ENCODE measurements at regions of chr15 and their contacts with region 1.

Region 1: DNA sequence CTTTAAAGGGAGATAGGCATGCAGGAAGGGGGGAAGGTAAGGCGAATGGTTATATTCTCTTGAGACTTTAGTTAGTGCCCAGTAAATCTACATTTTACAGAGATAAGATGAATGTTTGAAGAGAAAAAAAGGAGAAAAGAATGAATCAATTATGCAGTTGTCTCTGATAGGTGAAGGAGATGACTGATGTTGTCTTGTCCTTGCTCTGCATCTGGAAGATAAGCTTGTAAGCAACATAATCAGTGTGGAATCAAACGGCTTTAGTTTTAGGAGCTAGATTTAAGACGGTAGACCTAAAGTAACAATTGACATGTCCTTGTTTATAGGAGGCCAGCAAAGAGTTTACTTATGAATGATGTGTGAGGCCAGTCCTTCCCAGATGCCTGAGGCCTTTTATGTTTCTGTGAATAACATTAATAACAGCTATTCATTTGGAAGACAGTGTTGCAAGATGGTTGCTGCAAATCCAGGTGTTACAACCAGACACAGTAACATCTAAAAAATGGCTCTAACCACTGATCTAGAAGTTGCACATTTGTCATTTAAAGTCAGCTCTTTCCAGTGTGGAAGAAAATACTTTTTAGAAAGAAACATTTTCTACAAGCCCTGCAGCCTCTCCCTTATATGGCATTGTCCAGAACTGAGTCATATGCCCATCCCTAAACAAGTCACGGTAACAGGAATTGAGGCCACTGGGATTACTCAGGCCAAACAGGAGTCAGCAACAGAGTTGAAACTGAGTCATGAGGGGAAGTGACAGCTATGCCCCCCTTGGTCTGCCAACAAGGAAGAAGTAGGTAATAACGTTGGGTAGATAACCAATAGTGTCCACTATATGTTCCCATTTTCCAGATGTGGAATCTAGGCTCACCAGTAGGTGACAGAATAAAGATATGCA is 77.5 kb upstream of the FBN1 start:
- DNase-seq: peak; percentile 8
- H3K4me3 ChIP-seq: no peak overlapping the region
- CTCF ChIP-seq: no peak

Region 2: DNA sequence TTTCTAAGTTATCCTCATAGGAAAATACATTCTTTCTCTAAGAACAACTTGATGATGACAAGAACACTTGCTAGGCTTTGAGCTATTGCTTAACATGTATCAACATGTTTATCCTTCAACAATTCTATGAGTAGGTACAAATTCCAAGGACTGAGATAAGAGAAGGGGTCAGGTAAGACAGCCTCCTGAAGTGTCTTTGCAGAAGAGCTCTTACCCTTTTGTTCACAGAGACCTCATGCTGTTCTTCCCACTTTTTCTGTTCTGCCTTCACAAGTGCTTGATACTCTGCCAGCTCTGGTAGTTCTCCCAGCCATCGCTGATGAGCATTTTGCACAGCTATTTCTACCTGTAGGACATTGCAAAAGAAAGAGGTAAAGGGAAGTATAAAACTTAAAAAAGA is 36.9 kb after region 1 on chr15:
- in situ Hi-C with region 1: loop called (anchors 5 kb)
- DNase-seq: no peak
- H3K4me3 ChIP-seq: no peak overlapping the region
- CTCF ChIP-seq: no peak